CD8-positive, alpha-beta memory T cell (primary cell): ENCODE measurements at regions of chr5 and their contacts with region 1.

Region 1: DNA sequence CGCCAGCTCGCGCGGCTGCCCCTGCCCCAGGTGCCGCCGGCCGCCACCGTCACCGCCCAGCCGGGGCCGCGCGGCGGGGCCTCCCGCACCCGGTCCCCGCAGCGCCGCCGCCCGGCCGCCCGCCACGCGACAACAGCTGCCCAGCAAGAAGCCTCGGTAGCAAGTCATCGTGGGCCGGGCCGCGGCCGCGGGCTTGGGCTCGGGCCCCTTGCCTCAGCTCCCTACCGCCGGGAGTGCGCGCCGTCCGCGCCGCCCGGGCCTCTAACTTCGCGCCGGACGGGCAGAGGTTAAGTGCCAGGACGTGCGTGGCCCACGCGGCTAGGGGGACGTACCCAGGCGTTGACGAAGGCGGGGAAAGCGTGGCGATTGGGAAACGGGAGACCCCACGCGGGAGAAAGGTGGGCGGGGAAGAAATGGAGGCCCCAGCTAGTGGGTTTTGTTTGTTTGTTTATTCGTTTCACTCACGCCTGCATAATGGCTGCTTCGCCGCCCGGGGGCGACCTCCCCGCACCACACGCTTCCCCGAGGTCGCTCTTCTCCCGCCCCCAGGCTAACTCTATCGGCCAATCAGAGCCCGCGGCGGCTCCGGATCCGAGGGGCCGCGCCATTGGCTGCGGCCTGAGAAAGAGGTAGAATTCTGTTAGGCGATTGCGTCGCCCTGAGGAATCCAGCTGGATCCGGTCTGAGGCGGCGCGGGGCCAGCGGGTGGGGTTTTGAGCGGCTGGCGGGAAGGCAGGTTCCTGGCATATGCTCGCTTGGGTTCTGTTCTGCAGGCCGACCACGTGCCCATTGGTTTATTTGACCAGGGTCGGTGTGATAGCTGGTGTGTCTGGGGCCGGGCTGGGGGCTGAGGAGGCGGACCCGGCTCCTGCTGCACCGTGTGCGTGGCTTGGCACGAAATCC is at the start of gene NADK2:
- DNase-seq: peak; percentile 89 to 96 (median 96)
- H3K4me3 ChIP-seq: peak within 1 kb of the TSS; percentile 61
- H3K4me3 Mint-ChIP-seq: peak within 1 kb of the TSS; percentile 88 to 95 (median 91)
- H3K27ac ChIP-seq: peak within 1 kb of the TSS; percentile 87
- H3K27ac Mint-ChIP-seq: peak within 1 kb of the TSS; percentile 76 to 99 (median 93)
- H3K4me1 ChIP-seq: peaks cover 27% of the 10 kb centered on the region
- H3K4me1 Mint-ChIP-seq: peaks cover 43 to 60% (median 55%) of the 10 kb centered on the region in 3 donors
- H3K27me3 ChIP-seq: no peaks in the 10 kb centered on the region
- H3K27me3 Mint-ChIP-seq: peaks cover 0 to 1% of the 10 kb centered on the region in 2 donors
- total RNA-seq, gene NADK2: 22.7 to 24.3 TPM

Region 2: DNA sequence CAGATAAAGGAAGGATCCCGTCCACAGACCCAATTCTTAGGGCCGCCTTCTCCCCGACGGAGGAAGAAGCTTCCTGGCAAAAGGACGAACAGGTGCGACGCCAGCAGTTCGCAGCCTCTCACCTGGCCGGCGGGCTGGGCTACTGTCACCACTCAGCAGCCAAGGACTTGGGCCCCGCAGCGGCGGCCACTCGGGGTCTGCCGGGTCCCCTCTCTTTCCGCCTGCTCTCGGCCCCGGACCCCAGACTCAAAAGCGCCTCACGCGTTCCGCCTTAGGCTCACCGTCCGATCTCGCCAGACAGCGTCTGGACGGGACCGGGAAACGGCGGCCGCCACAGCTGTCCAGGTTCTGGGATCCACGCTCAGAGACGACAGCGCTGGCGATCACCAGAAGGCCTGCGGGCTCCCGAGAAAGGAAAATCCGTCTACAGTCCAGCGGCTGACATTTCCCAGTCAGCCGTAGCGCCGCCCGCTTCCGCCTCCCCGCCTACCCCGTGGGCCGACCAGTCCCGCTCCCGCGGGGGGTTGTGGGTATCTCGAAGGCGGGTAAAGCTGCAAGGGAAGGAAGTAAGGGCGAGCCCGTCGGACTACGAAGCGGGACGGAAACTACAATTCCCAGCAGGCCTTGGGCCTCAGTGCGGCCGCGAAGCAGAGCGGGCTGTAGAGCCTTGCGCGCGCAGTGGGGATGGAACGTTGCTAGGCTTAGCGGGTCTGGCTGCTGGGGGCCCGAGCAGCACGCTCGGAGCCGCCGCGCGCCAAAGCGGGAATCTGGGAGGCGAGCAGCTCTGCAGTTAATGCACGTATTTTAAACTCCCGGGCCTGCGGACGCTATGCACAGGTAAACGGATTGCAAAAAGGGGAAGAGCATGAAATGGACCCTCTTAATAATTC is 90.2 kb before region 1 on chr5 and contains the starts of genes LMBRD2 and SKP2:
- CTCF ChIA-PET with region 1: interaction called, 16 read pairs
- POLR2A ChIA-PET with region 1: interaction called, 35 read pairs
- DNase-seq: peak; percentile 96 to 98 (median 97)
- H3K4me3 ChIP-seq: peak within 1 kb of the TSS; percentile 80
- H3K4me3 Mint-ChIP-seq: peak within 1 kb of the TSS; percentile 94 to 99 (median 96)
- H3K27ac ChIP-seq: peak within 1 kb of the TSS; percentile 76
- H3K27ac Mint-ChIP-seq: peak within 1 kb of the TSS; percentile 73 to 96 (median 94)
- H3K4me1 ChIP-seq: peaks cover 18% of the 10 kb centered on the region
- H3K4me1 Mint-ChIP-seq: peaks cover 56 to 87% (median 83%) of the 10 kb centered on the region in 3 donors
- H3K27me3 ChIP-seq: no peaks in the 10 kb centered on the region
- H3K27me3 Mint-ChIP-seq: no peaks in the 10 kb centered on the region
- total RNA-seq, gene LMBRD2: 9.3 to 11.4 TPM
- total RNA-seq, gene SKP2: 52.8 to 56.4 TPM

Region 3: GRCh38 chr5:36230151-36230793 is 11.6 kb before region 1 on chr5:
- CTCF ChIA-PET with region 1: interaction called, 17 read pairs
- POLR2A ChIA-PET with region 1: no interaction called
- DNase-seq: no peak
- H3K4me3 ChIP-seq: no peak overlapping the region
- H3K4me3 Mint-ChIP-seq: no peak overlapping the region
- H3K27ac ChIP-seq: no peak overlapping the region
- H3K27ac Mint-ChIP-seq: peak overlapping the region in 1 of 8 donors; percentile 23
- H3K4me1 ChIP-seq: no peaks in the 10 kb centered on the region
- H3K4me1 Mint-ChIP-seq: peaks cover 7 to 18% (median 13%) of the 10 kb centered on the region in 3 donors
- H3K27me3 ChIP-seq: no peaks in the 10 kb centered on the region
- H3K27me3 Mint-ChIP-seq: no peaks in the 10 kb centered on the region

Region 4: DNA sequence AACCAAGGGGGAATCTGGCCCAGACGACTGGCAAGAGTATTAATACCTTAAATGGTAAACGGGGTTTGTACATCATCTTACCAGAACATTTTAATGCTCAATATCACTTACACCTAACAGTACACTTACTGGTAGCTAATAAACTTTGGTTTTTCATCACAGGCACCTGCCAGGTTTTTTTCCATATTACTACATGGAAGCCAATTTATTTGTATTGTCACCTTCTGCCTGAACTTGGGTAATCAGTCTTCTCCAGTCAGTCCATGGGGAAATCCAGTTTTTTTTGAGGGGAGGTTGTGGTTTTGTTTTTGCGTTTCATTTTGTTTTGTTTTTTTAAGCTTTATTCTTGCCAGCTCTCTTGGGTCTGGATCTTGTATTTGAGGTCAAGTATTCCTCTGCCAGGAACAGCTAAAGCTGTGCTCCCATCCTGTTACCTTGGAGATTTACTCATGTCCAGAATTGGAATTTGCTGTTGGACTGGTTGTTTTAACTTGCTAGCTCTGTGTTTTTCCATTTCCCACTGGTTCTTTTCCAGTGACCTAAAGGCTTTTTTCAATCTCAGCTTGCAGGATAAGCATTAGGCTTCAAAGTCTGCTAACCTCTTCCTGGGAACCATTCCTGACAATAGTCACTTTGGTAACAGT is 11.0 kb after region 1 on chr5:
- CTCF ChIA-PET with region 1: interaction called, 11 read pairs
- POLR2A ChIA-PET with region 1: no interaction called
- DNase-seq: no peak
- H3K4me3 ChIP-seq: no peak overlapping the region
- H3K4me3 Mint-ChIP-seq: no peak overlapping the region
- H3K27ac ChIP-seq: no peak overlapping the region
- H3K27ac Mint-ChIP-seq: peak overlapping the region in 1 of 8 donors; percentile 21
- H3K4me1 ChIP-seq: no peaks in the 10 kb centered on the region
- H3K4me1 Mint-ChIP-seq: no peaks in the 10 kb centered on the region
- H3K27me3 ChIP-seq: no peaks in the 10 kb centered on the region
- H3K27me3 Mint-ChIP-seq: peaks cover 12 to 54% of the 10 kb centered on the region in 2 donors